ENCODE measurements at regions of chr7 and their contacts with region 1.

Region 1: DNA sequence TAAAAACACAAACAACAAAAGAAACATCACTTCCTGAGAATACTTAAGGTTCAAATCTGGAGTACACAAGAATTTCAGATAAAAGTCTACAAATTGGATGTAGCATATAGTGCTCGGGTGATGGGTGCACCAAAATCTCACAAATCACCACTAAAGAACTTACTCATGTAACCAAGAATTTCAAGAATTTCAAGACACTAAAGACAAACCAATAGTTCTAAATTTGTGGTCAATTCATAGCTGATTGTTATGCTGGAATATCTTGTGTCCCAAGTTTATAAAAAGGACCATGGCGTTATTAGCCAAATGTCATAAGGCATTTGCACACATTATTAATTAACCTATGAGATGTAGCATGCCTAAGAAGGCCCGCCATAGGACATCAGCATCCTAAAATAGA is 1204.1 kb upstream of the AUTS2 start:
- DNase-seq: no peak
- H3K4me3 ChIP-seq: no peak overlapping the region
- H3K27ac ChIP-seq: no peak overlapping the region
- H3K4me1 ChIP-seq: no peaks in the 10 kb centered on the region
- H3K27me3 ChIP-seq: no peaks in the 10 kb centered on the region
- CTCF ChIP-seq: no peak
- EP300 ChIP-seq: no peak
- POLR2A ChIP-seq: no peak

Region 2: DNA sequence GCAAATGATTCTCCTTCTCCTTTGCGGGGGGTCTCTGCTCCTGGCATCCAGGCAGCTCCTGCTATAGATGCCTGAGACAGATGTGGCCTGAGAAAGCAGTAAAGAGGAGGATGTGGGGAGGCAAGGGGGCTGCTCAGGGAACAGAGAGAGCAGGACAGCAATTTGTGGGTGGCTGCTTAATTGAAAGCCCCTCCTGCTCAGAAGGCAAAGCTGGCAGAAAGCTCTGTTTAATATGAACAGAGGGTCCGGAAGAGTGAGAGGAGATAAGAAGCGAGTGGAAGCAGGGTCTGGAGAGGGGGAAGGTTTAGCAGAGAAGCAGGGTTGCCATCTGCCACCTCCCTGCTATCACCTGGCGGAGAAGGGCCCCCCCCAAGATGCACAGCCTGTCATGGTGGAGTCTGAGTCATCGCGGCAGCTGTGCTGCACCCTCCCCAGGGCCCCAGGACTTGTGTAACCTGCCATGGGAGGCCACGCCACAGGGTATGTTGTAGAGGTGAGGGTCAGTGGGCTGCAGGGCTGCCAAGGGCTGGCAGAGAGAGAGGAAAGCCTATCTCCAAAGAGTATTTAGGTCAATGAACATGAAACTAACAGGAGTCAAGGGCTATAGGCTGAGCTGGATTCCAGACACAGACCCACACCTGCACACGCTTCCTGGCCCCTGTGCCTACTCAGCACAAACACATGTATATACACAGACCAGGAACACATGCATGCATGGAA is 94.4 kb after region 1 on chr7:
- in situ Hi-C with region 1: loop called in 1 of 4 experiments (anchors 25 kb)
- intact Hi-C with region 1: no loop called
- DNase-seq: no peak
- H3K4me3 ChIP-seq: no peak overlapping the region
- H3K27ac ChIP-seq: no peak overlapping the region
- H3K4me1 ChIP-seq: no peaks in the 10 kb centered on the region
- H3K27me3 ChIP-seq: no peaks in the 10 kb centered on the region
- CTCF ChIP-seq: no peak
- EP300 ChIP-seq: no peak
- POLR2A ChIP-seq: no peak

Region 3: GRCh38 chr7:68671046-68671445 is 276.9 kb after region 1 on chr7:
- in situ Hi-C with region 1: no loop called
- intact Hi-C with region 1: no loop called
- DNase-seq: no peak
- H3K4me3 ChIP-seq: no peak overlapping the region
- H3K27ac ChIP-seq: no peak overlapping the region
- H3K4me1 ChIP-seq: peaks cover 0 to 4% (median 0%) of the 10 kb centered on the region in 4 donors
- H3K27me3 ChIP-seq: peaks cover 21% of the 10 kb centered on the region
- CTCF ChIP-seq: no peak
- EP300 ChIP-seq: no peak
- POLR2A ChIP-seq: no peak

Region 4: DNA sequence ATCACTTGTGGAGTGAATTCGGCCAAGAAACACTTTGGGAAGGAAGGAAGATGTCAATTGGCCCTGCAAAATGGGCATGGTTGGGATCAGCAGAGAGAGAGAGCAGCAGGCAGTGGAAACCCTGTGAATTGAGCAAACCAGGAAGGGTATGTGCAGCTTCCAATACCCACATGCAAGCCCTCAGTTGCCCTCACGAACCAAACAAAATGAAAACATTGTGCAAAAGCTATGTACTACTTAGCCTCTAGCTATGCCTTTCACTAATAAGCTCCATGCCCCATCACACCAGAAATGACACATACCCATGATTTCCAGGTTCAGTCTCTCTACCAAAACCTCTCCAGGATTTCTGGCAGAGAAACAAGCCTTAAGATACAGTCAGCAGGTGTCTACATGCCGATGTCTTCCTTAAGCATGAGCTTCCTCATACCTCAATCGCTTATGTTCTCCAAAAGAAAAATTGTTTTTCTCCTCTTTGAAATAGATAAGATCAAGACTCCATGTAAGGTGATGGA is 676.3 kb after region 1 on chr7:
- in situ Hi-C with region 1: no loop called
- intact Hi-C with region 1: no loop called
- DNase-seq: no peak
- H3K4me3 ChIP-seq: no peak overlapping the region
- H3K27ac ChIP-seq: no peak overlapping the region
- H3K4me1 ChIP-seq: no peaks in the 10 kb centered on the region
- H3K27me3 ChIP-seq: no peaks in the 10 kb centered on the region
- CTCF ChIP-seq: no peak
- EP300 ChIP-seq: no peak
- POLR2A ChIP-seq: no peak

Measured in transverse colon (tissue), 4 donors.